ENCODE measurements at regions of chr3 and their contacts with region 1.

Region 1: DNA sequence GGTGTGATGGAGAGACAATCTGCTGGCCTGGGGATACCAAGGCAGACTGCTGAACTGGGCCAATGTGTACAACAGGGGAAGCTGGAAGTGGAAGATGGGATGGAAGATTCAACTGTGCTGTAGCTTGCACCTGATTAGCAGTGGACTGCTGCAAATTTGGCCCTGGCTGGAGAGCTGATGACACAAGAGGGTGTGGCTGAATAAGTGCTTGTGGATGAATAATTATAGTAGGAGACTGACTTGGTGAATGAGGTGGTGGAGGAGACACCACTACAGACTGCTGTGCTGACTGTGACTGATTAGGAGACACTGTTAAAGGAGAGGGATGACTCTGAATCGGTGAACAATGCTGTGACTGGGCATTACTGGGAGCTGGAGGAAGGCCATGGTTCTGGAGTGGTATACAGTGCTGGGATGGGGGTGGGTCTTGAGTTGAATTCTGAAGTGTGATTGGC is 52.5 kb downstream of the PHC3 start:
- DNase-seq: peak; percentile 58
- H3K4me3 ChIP-seq: peak overlapping the region; percentile 61
- H3K27ac ChIP-seq: peak overlapping the region; percentile 96
- H3K4me1 ChIP-seq: peaks cover 94% of the 10 kb centered on the region
- CTCF ChIP-seq: 0 out of 2 replicates have a peak, but pooled peaks have one; percentile 2

Region 2: GRCh38 chr3:170037463-170038433 is 91.3 kb before region 1 on chr3 and contains the start of gene GPR160:
- CTCF ChIA-PET with region 1: no interaction called
- POLR2A ChIA-PET with region 1: interaction called, 5 read pairs
- intact Hi-C with region 1: loop called (anchors 5 kb)
- DNase-seq: peak; percentile 95
- H3K4me3 ChIP-seq: peak within 1 kb of the TSS; percentile 94
- H3K27ac ChIP-seq: peak within 1 kb of the TSS; percentile 64
- H3K4me1 ChIP-seq: peaks cover 40% of the 10 kb centered on the region
- CTCF ChIP-seq: peak; percentile 81
- total RNA-seq, gene GPR160: 90.5 and 108 TPM in 2 replicates

Region 3: DNA sequence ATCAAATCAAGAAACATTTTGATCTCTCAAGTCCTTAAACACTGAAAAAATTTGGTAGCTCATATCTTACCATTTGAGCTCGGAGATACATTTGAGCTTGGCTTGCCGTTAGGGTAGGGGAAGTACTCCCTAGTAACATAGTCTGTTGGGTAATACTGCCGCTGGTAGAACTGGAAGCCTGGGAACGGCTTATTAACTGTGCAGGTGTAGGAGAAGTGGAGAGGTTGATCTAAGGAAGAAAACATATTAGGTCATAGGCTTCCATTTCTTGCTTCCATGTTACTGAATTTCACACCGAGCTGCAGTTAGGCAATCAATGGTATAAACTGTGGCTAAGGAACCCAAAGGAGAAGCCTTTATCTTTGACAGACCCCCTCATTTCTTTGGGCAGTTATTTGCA is 20.0 kb after region 1 on chr3:
- CTCF ChIA-PET with region 1: interaction called, 3 read pairs
- POLR2A ChIA-PET with region 1: interaction called, 86 read pairs
- intact Hi-C with region 1: loop called (anchors 1 kb)
- DNase-seq: no peak
- H3K4me3 ChIP-seq: no peak overlapping the region
- H3K27ac ChIP-seq: no peak overlapping the region
- H3K4me1 ChIP-seq: peaks cover 54% of the 10 kb centered on the region
- CTCF ChIP-seq: no peak

Region 4: GRCh38 chr3:170162630-170163029 is 33.6 kb after region 1 on chr3:
- CTCF ChIA-PET with region 1: interaction called, 4 read pairs
- POLR2A ChIA-PET with region 1: interaction called, 10 read pairs
- intact Hi-C with region 1: no loop called
- DNase-seq: no peak
- H3K4me3 ChIP-seq: no peak overlapping the region
- H3K27ac ChIP-seq: no peak overlapping the region
- H3K4me1 ChIP-seq: peaks cover 27% of the 10 kb centered on the region
- CTCF ChIP-seq: no peak

Region 5: DNA sequence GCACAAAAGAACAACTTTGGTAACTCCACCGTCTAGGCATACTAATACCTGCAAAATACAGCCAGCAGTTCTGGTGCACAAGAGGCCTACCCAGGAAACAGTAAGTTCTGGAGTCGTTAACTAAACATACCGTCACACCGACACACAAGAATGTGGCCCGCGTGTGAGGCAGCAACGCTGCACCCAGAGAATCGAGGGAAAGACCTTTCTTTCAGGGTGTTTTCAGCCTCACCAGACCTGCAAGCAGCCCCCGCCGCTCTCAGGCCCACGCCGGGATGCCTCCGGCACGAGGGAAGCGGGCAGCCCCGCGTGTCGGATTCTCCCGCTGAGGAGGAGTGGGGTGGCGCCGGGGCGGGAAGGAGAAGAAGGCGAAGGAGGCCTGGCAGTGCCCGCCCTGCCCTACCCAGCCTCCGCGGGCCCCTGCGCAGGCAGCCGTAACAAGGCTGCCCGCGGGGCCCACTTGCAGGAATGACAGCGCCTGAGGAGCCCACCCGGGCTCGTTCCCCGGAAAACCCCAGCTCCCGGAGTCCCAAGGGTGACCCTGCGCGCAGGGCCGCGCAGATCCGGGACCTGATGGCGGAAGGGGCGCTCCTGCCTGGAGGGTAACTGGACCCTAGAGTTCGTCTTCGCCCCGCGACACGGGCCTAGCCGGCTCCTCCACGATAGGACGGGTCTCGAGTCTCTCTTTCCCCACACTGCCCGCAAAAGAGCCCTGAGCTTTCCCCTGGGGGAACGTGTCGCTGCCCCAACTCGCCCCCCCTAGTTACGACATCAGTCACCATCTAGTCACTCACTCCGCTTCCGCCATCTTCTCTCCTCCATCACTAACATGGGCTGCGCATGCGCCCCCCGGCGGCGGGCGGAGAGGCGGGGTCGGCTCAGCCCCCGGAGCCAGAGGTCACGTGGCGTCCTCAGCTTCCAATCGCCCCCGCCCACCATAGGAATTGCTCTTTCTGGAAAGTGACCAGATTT is 52.2 kb after region 1 on chr3 and contains the start of gene PHC3:
- CTCF ChIA-PET with region 1: no interaction called
- POLR2A ChIA-PET with region 1: interaction called, 7 read pairs
- intact Hi-C with region 1: loop called (anchors 1 kb)
- DNase-seq: peak; percentile 94
- H3K4me3 ChIP-seq: peak within 1 kb of the TSS; percentile 79
- H3K27ac ChIP-seq: peak within 1 kb of the TSS; percentile 65
- H3K4me1 ChIP-seq: peaks cover 23% of the 10 kb centered on the region
- CTCF ChIP-seq: peak; percentile 51; the same call in 1 of the 2 replicates
- total RNA-seq, gene PHC3: 36.1 and 40.6 TPM in 2 replicates

Measured in OCI-LY7 (cell line).